ENCODE measurements at regions of chr18 and their contacts with region 1.

Region 1: GRCh38 chr18:42028247-42028832 is 73.3 kb downstream of the PIK3C3 start:
- DNase-seq: peak; percentile 18 to 48 (median 30)
- H3K4me3 ChIP-seq: no peak overlapping the region
- H3K4me3 Mint-ChIP-seq: no peak overlapping the region
- H3K27ac ChIP-seq: no peak overlapping the region
- H3K27ac Mint-ChIP-seq: peak overlapping the region in 1 of 7 donors; percentile 42
- H3K4me1 ChIP-seq: peaks cover 24% of the 10 kb centered on the region
- H3K4me1 Mint-ChIP-seq: peaks cover 14 to 29% (median 23%) of the 10 kb centered on the region in 4 donors
- H3K27me3 ChIP-seq: no peaks in the 10 kb centered on the region
- H3K27me3 Mint-ChIP-seq: no peaks in the 10 kb centered on the region

Region 2: DNA sequence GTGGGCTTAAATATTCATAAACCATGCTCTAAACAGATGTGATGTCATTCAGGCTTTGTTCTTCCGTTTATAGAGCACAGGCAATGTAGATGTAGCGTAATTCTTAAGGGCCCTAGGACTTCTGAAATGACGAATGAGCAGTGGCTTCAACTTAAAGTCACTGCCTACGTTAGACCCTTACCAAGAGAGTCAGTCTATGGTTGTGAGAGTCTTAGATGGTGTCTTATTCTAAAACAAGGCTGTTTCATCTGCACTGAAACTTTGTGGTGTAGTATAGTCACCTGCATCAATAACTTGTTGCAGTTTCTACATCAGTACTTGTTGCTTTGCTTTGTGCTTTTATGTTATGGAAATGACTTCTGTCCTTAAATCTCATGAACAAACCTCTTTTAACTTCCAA is 17.3 kb before region 1 on chr18:
- CTCF ChIA-PET with region 1: interaction called, 23 read pairs
- POLR2A ChIA-PET with region 1: no interaction called
- intact Hi-C with region 1: no loop called
- DNase-seq: no peak
- H3K4me3 ChIP-seq: no peak overlapping the region
- H3K4me3 Mint-ChIP-seq: no peak overlapping the region
- H3K27ac ChIP-seq: no peak overlapping the region
- H3K27ac Mint-ChIP-seq: peak overlapping the region in 1 of 7 donors; percentile 18
- H3K4me1 ChIP-seq: no peaks in the 10 kb centered on the region
- H3K4me1 Mint-ChIP-seq: peaks cover 0 to 11% (median 5%) of the 10 kb centered on the region in 4 donors
- H3K27me3 ChIP-seq: no peaks in the 10 kb centered on the region
- H3K27me3 Mint-ChIP-seq: no peaks in the 10 kb centered on the region

Region 3: DNA sequence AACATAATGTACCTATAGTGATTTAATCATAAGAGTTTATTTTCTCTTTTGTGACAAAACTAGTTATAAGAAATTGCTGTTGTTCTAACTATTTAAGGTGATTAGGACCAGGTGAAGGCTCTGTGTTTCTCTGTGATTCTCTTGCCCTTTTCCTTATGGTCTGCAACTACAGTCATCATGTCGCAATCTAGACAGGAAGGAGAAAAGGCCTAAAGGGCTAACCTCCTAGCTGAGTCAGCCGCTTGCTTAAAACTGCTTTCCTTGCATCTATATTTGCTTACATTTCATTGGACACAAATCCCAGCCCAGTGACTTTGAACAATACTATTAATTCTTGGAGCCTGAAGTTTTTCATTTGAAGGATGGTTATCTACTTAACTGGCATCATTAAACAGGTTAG is 19.8 kb after region 1 on chr18:
- CTCF ChIA-PET with region 1: interaction called, 17 read pairs
- POLR2A ChIA-PET with region 1: no interaction called
- intact Hi-C with region 1: no loop called
- DNase-seq: no peak
- H3K4me3 ChIP-seq: no peak overlapping the region
- H3K4me3 Mint-ChIP-seq: no peak overlapping the region
- H3K27ac ChIP-seq: no peak overlapping the region
- H3K27ac Mint-ChIP-seq: peak overlapping the region in 2 of 7 donors; percentile 41 to 42
- H3K4me1 ChIP-seq: no peaks in the 10 kb centered on the region
- H3K4me1 Mint-ChIP-seq: peaks cover 5 to 8% (median 5%) of the 10 kb centered on the region in 4 donors
- H3K27me3 ChIP-seq: no peaks in the 10 kb centered on the region
- H3K27me3 Mint-ChIP-seq: no peaks in the 10 kb centered on the region

Measured in CD4-positive, alpha-beta memory T cell (primary cell).